ENCODE measurements at regions of chr5 and their contacts with region 1.

Region 1: GRCh38 chr5:96344678-96345577 is 88.1 kb downstream of the PCSK1 start:
- DNase-seq: no peak
- H3K4me3 Mint-ChIP-seq: peak overlapping the region; percentile 2
- H3K27ac Mint-ChIP-seq: no peak overlapping the region
- H3K4me1 Mint-ChIP-seq: peaks cover 22% of the 10 kb centered on the region
- H3K27me3 Mint-ChIP-seq: peaks cover 42% of the 10 kb centered on the region

Region 2: DNA sequence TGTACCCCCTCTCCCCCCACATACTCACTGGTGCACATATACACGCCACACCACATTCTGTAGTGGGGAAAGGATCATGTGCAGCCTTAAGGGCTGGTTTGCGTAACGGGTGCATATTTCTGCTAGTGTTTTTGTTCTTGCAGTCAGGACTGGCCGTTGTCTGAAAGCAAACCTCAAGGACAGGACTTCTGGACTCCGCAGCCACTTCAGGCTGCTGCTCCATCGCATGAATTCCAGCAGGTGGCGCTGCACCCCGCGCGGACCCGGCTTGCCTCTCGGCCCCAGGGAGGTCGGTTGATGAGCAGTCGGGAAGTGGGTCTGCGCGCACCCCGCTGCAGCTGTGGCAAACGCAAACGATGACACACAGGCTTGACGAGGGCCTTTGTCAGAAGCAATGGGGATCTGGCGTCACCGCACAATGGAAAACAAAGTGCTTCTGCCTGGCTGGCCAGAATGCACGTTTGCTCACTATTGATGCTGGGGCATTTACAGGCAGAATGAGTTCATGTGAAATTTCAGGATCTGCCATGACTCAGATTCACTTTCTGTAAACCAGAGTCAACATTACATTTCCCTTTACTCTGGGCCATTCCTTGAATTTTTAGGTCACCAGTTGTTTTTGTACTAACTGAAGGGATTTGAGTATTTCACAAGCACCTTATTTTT is 486.1 kb before region 1 on chr5:
- intact Hi-C with region 1: loop called (anchors 2 kb)
- DNase-seq: peak; percentile 84
- H3K4me3 Mint-ChIP-seq: peak overlapping the region; percentile 38
- H3K27ac Mint-ChIP-seq: peak overlapping the region; percentile 80
- H3K4me1 Mint-ChIP-seq: peaks cover 52% of the 10 kb centered on the region
- H3K27me3 Mint-ChIP-seq: no peaks in the 10 kb centered on the region

Region 3: DNA sequence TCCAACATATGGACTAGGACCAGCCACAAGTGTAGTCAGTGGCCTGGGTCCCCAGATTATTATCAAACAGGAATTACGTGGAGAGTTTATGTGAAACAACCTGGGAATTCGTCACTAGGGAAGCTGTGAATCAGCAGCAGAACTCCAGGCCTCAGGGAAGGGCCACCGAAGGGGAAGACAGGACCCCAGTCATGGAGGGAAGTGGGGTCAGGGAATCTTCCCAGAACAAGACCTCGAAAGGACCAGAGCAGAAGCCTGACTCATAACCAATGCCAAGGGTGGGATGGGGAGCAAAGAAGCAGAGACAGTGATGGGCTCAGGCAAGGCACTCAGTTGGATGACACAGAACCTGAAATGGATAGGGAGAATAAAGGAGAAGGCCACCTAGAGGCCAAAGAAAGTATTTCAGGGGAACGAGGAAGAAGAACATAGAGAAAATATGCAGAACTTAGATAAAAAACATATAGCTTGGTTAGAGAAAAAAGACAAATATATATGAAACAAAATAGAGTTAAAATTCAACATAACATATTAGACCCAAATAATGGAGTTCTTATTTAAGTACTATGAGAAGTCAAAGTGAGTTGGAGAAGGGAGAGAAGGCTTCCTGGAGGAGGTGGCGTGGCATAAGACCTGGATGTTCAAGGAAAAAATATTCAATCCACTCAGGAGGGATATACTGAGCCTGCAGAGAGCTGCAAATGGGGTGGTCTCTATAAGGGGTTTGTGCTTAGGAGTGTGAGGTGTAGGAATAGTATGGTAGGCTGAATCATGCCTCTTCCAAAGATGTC is 250.6 kb after region 1 on chr5:
- intact Hi-C with region 1: loop called (anchors 1 kb)
- DNase-seq: no peak
- H3K4me3 Mint-ChIP-seq: no peak overlapping the region
- H3K27ac Mint-ChIP-seq: no peak overlapping the region
- H3K4me1 Mint-ChIP-seq: peaks cover 14% of the 10 kb centered on the region
- H3K27me3 Mint-ChIP-seq: peaks cover 37% of the 10 kb centered on the region

Region 4: GRCh38 chr5:96662725-96663513 is 318.0 kb after region 1 on chr5:
- intact Hi-C with region 1: loop called (anchors 5 kb)
- DNase-seq: peak; percentile 82
- H3K4me3 Mint-ChIP-seq: peak overlapping the region; percentile 90
- H3K27ac Mint-ChIP-seq: peak overlapping the region; percentile 96
- H3K4me1 Mint-ChIP-seq: peaks cover 55% of the 10 kb centered on the region
- H3K27me3 Mint-ChIP-seq: peaks cover 26% of the 10 kb centered on the region

Region 5: DNA sequence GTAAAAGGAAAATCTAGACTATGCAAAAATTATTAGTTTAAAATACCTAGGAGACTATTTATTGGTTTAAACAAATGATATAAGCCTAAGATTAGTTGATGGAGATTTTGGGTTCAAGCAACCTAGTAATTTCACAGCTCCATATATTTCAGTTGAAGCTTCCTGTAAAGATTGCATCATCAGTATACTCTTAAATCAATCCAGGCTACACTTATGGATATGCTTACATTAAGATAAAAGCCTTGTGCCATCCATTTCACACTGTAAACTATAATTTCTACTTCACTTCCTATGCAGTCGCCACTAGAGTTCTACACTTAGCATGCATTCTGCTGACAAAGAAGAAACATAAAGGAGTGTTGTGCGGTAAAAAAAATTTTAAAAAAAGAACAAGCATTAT is 804.8 kb after region 1 on chr5:
- intact Hi-C with region 1: loop called (anchors 10 kb)
- DNase-seq: no peak
- H3K4me3 Mint-ChIP-seq: no peak overlapping the region
- H3K27ac Mint-ChIP-seq: no peak overlapping the region
- H3K4me1 Mint-ChIP-seq: no peaks in the 10 kb centered on the region
- H3K27me3 Mint-ChIP-seq: peaks cover 14% of the 10 kb centered on the region

Measured in activated T-helper 2 cell treated with anti-CD3 and anti-CD28 coated beads, Interferon-gamma antibody, Interleukin-2, Interleukin-4, amounts not matched to agents 10 μg/mL and 5 μg/mL and 100 μg/mL, durations not matched to agents 14 hours and 24 hours and 36 hours (primary cell).